ENCODE measurements at regions of chr1 and their contacts with region 1.

Region 1: DNA sequence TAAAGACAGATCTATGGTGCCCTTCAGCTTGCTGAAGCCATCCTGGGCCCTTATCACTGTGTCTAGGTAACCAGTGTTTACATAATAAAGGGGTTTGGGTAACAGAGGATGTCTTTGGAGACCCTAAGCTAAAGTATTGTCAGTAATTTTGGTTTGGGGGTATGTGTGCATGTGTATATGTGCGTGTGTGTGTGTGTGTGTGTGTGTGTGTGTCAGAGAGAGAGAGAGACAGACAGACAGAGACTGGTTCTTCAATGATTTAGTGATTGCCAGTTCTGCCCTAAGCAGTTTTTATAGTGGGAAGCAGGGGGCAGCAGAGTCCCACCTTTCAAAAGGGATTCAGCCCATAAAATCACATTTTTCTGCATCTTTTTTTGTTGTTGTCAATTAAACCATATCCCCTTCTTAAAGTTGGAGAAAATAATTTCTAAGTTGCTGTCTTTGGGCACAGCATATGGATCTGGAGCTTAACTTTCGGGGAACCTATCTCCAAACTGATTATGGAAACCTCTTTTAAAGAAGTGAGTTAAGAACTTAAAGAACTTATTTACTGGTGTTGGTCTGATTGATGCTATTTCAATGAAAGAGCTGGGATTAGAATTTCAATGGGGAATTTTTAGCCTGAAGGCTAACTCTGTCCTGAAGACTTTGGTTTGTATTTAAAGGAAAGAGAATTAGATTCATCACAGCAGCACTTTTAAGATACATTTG is 51.1 kb downstream of the ZNF326 start:
- DNase-seq: peak; percentile 35
- H3K4me3 ChIP-seq: no peak overlapping the region
- H3K27ac ChIP-seq: no peak overlapping the region
- H3K4me1 ChIP-seq: no peaks in the 10 kb centered on the region
- H3K27me3 ChIP-seq: peaks cover 8 to 23% of the 10 kb centered on the region in 2 experiments
- CTCF ChIP-seq: peak; percentile 57 to 65
- POLR2A ChIP-seq: no peak

Region 2: GRCh38 chr1:90083995-90084394 is 38.0 kb after region 1 on chr1:
- CTCF ChIA-PET with region 1: no interaction called
- POLR2A ChIA-PET with region 1: no interaction called
- dilution Hi-C with region 1: no loop called
- intact Hi-C with region 1: no loop called
- DNase-seq: no peak
- H3K4me3 ChIP-seq: no peak overlapping the region
- H3K27ac ChIP-seq: no peak overlapping the region
- H3K4me1 ChIP-seq: no peaks in the 10 kb centered on the region
- H3K27me3 ChIP-seq: peaks cover 0 to 2% of the 10 kb centered on the region in 2 experiments
- CTCF ChIP-seq: no peak
- POLR2A ChIP-seq: no peak

Region 3: DNA sequence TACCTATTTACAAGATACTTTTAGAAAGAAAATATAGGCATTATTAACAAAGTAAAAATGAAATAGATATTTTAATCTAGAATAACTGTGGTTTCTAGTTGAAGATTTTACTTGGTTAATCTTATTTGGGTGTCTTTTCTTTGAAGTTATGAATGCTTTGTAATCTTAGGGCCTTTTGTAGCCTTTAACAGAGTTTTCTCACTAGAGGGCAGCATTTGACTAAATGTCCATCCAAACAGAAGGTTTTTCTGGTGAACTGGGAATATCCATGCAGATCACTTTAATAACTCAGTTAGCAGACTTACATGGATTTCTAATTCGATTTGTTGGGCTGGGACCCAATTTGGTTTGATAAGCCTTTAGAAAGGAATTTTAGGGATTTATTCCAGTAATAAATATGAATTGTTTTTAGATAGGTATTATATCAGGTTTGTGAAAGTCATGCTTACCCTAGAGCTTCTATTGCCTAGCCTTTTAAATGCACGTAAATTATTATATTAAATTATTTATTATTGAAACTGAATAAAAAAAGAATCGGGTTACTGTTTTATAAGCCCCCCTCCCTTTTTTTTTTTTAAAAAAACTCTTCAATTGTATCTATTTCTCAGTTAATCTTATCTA is 68.6 kb after region 1 on chr1:
- CTCF ChIA-PET with region 1: interaction called, 9 read pairs
- POLR2A ChIA-PET with region 1: no interaction called
- dilution Hi-C with region 1: no loop called
- intact Hi-C with region 1: loop called (anchors 2 kb)
- DNase-seq: peak; percentile 59
- H3K4me3 ChIP-seq: no peak overlapping the region
- H3K27ac ChIP-seq: no peak overlapping the region
- H3K4me1 ChIP-seq: no peaks in the 10 kb centered on the region
- H3K27me3 ChIP-seq: peaks cover 7 to 9% of the 10 kb centered on the region in 2 experiments
- CTCF ChIP-seq: peak; percentile 34 to 52
- POLR2A ChIP-seq: no peak

Region 4: DNA sequence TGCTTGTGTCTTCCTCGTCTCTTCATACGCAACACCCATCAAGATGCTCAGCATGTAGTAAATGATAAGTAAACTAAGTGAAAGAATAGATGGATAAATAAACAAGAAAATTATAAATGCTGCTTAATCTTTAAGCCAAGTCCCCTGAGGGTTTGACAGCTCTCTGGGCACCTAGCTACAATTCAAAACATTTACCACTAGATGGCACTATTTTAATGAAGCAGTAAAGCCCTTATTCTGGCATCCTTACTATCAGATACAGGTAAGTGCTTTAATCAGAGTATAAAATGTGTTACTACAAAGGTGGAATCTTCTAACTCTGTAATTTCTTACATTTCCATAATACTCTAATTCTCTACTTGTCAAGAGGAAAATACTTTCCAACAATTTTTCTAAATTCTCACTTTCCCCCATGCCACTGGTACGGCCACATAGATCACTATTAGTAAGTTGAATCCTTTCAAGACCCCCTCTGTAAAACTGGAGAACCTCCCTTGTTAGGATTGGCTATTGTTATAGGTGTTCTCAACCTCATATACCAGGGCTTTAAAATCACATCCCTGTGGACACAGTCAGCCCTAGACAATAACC is 533.3 kb after region 1 on chr1:
- CTCF ChIA-PET with region 1: interaction called, 4 read pairs
- POLR2A ChIA-PET with region 1: no interaction called
- dilution Hi-C with region 1: no loop called
- intact Hi-C with region 1: loop called (anchors 2 kb)
- DNase-seq: peak; percentile 51
- H3K4me3 ChIP-seq: no peak overlapping the region
- H3K27ac ChIP-seq: no peak overlapping the region
- H3K4me1 ChIP-seq: no peaks in the 10 kb centered on the region
- H3K27me3 ChIP-seq: no peaks in the 10 kb centered on the region
- CTCF ChIP-seq: peak; percentile 36 to 46
- POLR2A ChIP-seq: no peak

Region 5: GRCh38 chr1:90721210-90722194 is 675.5 kb after region 1 on chr1:
- CTCF ChIA-PET with region 1: interaction called, 3 read pairs
- POLR2A ChIA-PET with region 1: no interaction called
- dilution Hi-C with region 1: no loop called
- intact Hi-C with region 1: loop called (anchors 2 kb)
- DNase-seq: peak; percentile 75
- H3K4me3 ChIP-seq: no peak overlapping the region
- H3K27ac ChIP-seq: no peak overlapping the region
- H3K4me1 ChIP-seq: peaks cover 2% of the 10 kb centered on the region
- H3K27me3 ChIP-seq: peaks cover 85 to 97% of the 10 kb centered on the region in 2 experiments
- CTCF ChIP-seq: peak; percentile 87 to 96
- POLR2A ChIP-seq: no peak